ENCODE measurements at regions of chr1 and their contacts with region 1.

Region 1: DNA sequence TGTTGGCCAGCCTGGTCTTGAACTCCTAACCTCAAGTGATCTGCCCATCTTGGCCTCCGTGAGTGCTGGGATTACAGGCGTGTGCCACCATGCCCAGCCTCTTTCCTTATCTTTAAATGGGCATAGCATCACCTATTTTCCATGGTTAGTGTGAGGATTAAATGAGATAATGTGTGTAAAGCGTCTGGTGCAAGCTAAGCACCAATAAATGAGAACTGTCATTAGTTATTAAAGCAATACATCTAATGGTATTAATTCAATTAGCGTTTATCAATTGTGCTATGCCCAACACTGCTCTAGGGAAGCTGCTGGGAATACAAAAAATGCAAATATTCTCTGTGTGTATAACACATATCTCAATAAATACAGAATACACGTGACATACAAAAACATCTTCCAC is 10.0 kb downstream of the EXOC8 start:
- DNase-seq: no peak
- ATAC-seq: no peak
- H3K4me3 ChIP-seq: no peak overlapping the region
- H3K27ac ChIP-seq: no peak overlapping the region
- H3K4me1 ChIP-seq: no peaks in the 10 kb centered on the region; the same call in 1 of the 2 replicates
- H3K27me3 ChIP-seq: no peaks in the 10 kb centered on the region
- CTCF ChIP-seq: no peak

Region 2: GRCh38 chr1:230808281-230808872 is 519.2 kb before region 1 on chr1:
- CTCF ChIA-PET with region 1: no interaction called
- POLR2A ChIA-PET with region 1: interaction called, 11 read pairs
- in situ Hi-C with region 1: no loop called
- intact Hi-C with region 1: no loop called
- DNase-seq: no peak
- ATAC-seq: no peak
- H3K4me3 ChIP-seq: no peak overlapping the region
- H3K27ac ChIP-seq: no peak overlapping the region
- H3K4me1 ChIP-seq: no peaks in the 10 kb centered on the region
- H3K27me3 ChIP-seq: no peaks in the 10 kb centered on the region
- CTCF ChIP-seq: no peak

Region 3: DNA sequence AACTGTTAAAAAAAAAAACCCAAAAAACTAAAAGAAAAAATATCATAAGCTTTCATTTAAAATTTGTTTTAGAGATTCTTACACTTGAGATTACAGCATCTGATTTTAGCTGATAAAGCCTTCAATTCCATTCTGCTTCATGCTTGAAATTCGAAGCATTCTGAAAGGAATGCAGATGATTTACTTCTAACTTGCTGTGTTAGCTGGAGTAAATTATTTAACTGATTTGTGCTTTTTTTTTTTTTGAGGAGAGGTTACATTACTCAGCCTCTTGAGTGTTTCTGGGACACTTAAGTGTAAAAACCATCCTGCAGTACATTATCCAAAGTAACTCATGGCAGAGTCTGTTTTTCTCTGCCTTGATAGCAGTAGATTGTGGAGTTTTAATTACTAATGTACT is 170.3 kb before region 1 on chr1:
- CTCF ChIA-PET with region 1: no interaction called
- POLR2A ChIA-PET with region 1: no interaction called
- in situ Hi-C with region 1: no loop called
- intact Hi-C with region 1: no loop called
- DNase-seq: no peak
- ATAC-seq: no peak
- H3K4me3 ChIP-seq: no peak overlapping the region
- H3K27ac ChIP-seq: no peak overlapping the region
- H3K4me1 ChIP-seq: no peaks in the 10 kb centered on the region
- H3K27me3 ChIP-seq: peaks cover 18% of the 10 kb centered on the region
- CTCF ChIP-seq: no peak